ENCODE measurements at regions of chr2 and their contacts with region 1.

Region 1: GRCh38 chr2:239401067-239401880 is 454 bp upstream of the HDAC4 start:
- DNase-seq: peak; percentile 99 to 100 (median 99)
- ATAC-seq: peak; percentile 88
- H3K4me3 ChIP-seq: peak overlapping the region; percentile 95 to 96
- H3K4me3 Mint-ChIP-seq: peak overlapping the region; percentile 93
- H3K27ac ChIP-seq: peak overlapping the region; percentile 99 to 100
- H3K27ac Mint-ChIP-seq: peak overlapping the region; percentile 98
- H3K4me1 ChIP-seq: peaks cover 18% of the 10 kb centered on the region
- H3K4me1 Mint-ChIP-seq: peaks cover 43% of the 10 kb centered on the region
- H3K27me3 ChIP-seq: no peaks in the 10 kb centered on the region
- H3K27me3 Mint-ChIP-seq: no peaks in the 10 kb centered on the region
- CTCF ChIP-seq: no peak

Region 2: GRCh38 chr2:238963161-238963970 is 437.9 kb before region 1 on chr2:
- CTCF ChIA-PET with region 1: no interaction called
- POLR2A ChIA-PET with region 1: no interaction called
- intact Hi-C with region 1: no loop called
- DNase-seq: peak in 1 of 9 experiments; percentile 4
- ATAC-seq: no peak
- H3K4me3 ChIP-seq: no peak overlapping the region
- H3K4me3 Mint-ChIP-seq: no peak overlapping the region
- H3K27ac ChIP-seq: no peak overlapping the region
- H3K27ac Mint-ChIP-seq: no peak overlapping the region
- H3K4me1 ChIP-seq: no peaks in the 10 kb centered on the region
- H3K4me1 Mint-ChIP-seq: no peaks in the 10 kb centered on the region
- H3K27me3 ChIP-seq: no peaks in the 10 kb centered on the region
- H3K27me3 Mint-ChIP-seq: peaks cover 12% of the 10 kb centered on the region
- CTCF ChIP-seq: no peak

Region 3: GRCh38 chr2:239035361-239036078 is 365.8 kb before region 1 on chr2:
- CTCF ChIA-PET with region 1: interaction called, 3 read pairs
- POLR2A ChIA-PET with region 1: no interaction called
- intact Hi-C with region 1: loop called in 1 of 2 experiments (anchors 2 kb)
- DNase-seq: peak; percentile 43 to 79 (median 67)
- ATAC-seq: peak; percentile 91
- H3K4me3 ChIP-seq: no peak overlapping the region
- H3K4me3 Mint-ChIP-seq: no peak overlapping the region
- H3K27ac ChIP-seq: no peak overlapping the region
- H3K27ac Mint-ChIP-seq: no peak overlapping the region
- H3K4me1 ChIP-seq: no peaks in the 10 kb centered on the region
- H3K4me1 Mint-ChIP-seq: no peaks in the 10 kb centered on the region
- H3K27me3 ChIP-seq: peaks cover 0 to 6% of the 10 kb centered on the region in 2 experiments
- H3K27me3 Mint-ChIP-seq: peaks cover 7% of the 10 kb centered on the region
- CTCF ChIP-seq: peak; percentile 85

Region 4: GRCh38 chr2:239288951-239289511 is 112.2 kb before region 1 on chr2:
- CTCF ChIA-PET with region 1: no interaction called
- POLR2A ChIA-PET with region 1: no interaction called
- intact Hi-C with region 1: loop called in 1 of 2 experiments (anchors 5 kb)
- DNase-seq: peak in 5 of 9 experiments; percentile 39 to 86 (median 57)
- ATAC-seq: peak; percentile 69
- H3K4me3 ChIP-seq: peak overlapping the region; percentile 32 to 42
- H3K4me3 Mint-ChIP-seq: peak overlapping the region; percentile 74
- H3K27ac ChIP-seq: peak overlapping the region; percentile 80 to 87
- H3K27ac Mint-ChIP-seq: peak overlapping the region; percentile 98
- H3K4me1 ChIP-seq: peaks cover 76% of the 10 kb centered on the region
- H3K4me1 Mint-ChIP-seq: peaks cover 72% of the 10 kb centered on the region
- H3K27me3 ChIP-seq: no peaks in the 10 kb centered on the region
- H3K27me3 Mint-ChIP-seq: no peaks in the 10 kb centered on the region
- CTCF ChIP-seq: no peak

Region 5: GRCh38 chr2:239326831-239327535 is 74.3 kb before region 1 on chr2:
- CTCF ChIA-PET with region 1: interaction called, 3 read pairs
- POLR2A ChIA-PET with region 1: interaction called, 5 read pairs
- intact Hi-C with region 1: loop called (anchors 2 kb)
- DNase-seq: peak; percentile 30 to 85 (median 74)
- ATAC-seq: peak; percentile 69
- H3K4me3 ChIP-seq: peak overlapping the region in 1 of 2 experiments; percentile 9
- H3K4me3 Mint-ChIP-seq: peak overlapping the region; percentile 36
- H3K27ac ChIP-seq: peak overlapping the region; percentile 34 to 44
- H3K27ac Mint-ChIP-seq: peak overlapping the region; percentile 91
- H3K4me1 ChIP-seq: peaks cover 84% of the 10 kb centered on the region
- H3K4me1 Mint-ChIP-seq: peaks cover 87% of the 10 kb centered on the region
- H3K27me3 ChIP-seq: no peaks in the 10 kb centered on the region
- H3K27me3 Mint-ChIP-seq: no peaks in the 10 kb centered on the region
- CTCF ChIP-seq: no peak

Region 6: GRCh38 chr2:239380831-239381708 is 20.2 kb before region 1 on chr2:
- CTCF ChIA-PET with region 1: interaction called, 30 read pairs
- POLR2A ChIA-PET with region 1: interaction called, 9 read pairs
- intact Hi-C with region 1: loop called (anchors 1 kb)
- DNase-seq: peak; percentile 51 to 87 (median 71)
- ATAC-seq: peak; percentile 90
- H3K4me3 ChIP-seq: peak overlapping the region; percentile 26 to 36
- H3K4me3 Mint-ChIP-seq: peak overlapping the region; percentile 86
- H3K27ac ChIP-seq: peak overlapping the region; percentile 42 to 62
- H3K27ac Mint-ChIP-seq: peak overlapping the region; percentile 96
- H3K4me1 ChIP-seq: peaks cover 17% of the 10 kb centered on the region
- H3K4me1 Mint-ChIP-seq: peaks cover 30% of the 10 kb centered on the region
- H3K27me3 ChIP-seq: no peaks in the 10 kb centered on the region
- H3K27me3 Mint-ChIP-seq: no peaks in the 10 kb centered on the region
- CTCF ChIP-seq: no peak

Region 7: DNA sequence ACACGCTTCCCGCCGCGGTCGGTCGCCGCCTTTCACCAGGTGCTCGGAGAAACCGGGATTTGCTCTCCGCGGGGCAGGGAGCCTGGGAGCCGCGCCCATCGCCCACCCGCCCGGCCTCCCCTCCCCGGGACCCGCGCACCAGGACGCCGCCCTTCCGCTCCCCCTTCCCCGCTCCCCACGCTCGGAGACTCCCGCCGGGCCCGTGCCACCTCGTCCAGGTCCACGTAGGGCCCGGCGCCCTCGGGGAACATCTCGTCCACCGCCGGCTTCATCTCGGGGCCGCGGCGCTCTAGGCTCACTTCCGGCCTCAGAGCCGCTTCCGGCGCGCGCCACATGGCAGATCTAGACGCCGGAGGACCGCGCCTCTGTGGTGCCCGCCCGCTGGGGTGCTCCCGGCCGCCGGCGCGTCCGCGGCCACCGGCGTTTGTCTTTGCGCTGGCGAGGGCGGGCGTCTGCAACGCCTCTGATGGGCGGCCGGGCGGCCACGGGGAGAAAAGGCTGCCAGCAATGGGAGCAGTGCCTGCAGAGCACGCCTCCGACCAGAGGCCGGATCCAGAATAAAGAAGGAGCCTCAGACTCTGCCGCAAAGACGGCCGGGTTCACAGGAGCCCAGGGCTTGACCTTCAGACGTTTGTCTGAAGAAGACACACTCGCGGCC is 734.9 kb after region 1 on chr2 and contains the start of gene COPS9:
- CTCF ChIA-PET with region 1: no interaction called
- POLR2A ChIA-PET with region 1: no interaction called
- intact Hi-C with region 1: loop called in 1 of 2 experiments (anchors 5 kb)
- DNase-seq: peak; percentile 78 to 92 (median 86)
- ATAC-seq: peak; percentile 95
- H3K4me3 ChIP-seq: peak within 1 kb of the TSS; percentile 92 to 93
- H3K4me3 Mint-ChIP-seq: peak within 1 kb of the TSS; percentile 92
- H3K27ac ChIP-seq: peak within 1 kb of the TSS; percentile 61 to 76
- H3K27ac Mint-ChIP-seq: peak within 1 kb of the TSS; percentile 89
- H3K4me1 ChIP-seq: peaks cover 16% of the 10 kb centered on the region
- H3K4me1 Mint-ChIP-seq: peaks cover 27% of the 10 kb centered on the region
- H3K27me3 ChIP-seq: no peaks in the 10 kb centered on the region
- H3K27me3 Mint-ChIP-seq: no peaks in the 10 kb centered on the region
- CTCF ChIP-seq: no peak
- total RNA-seq, gene COPS9: 56.4 to 59.6 TPM

Measured in CD8-positive, alpha-beta T cell (primary cell).